Sigmoid colon (tissue), 7 donors: ENCODE measurements at regions of chrX and their contacts with region 1.

Region 1: GRCh38 chrX:19887911-19888879 is 795 bp upstream of the SH3KBP1 start:
- DNase-seq: peak; percentile 67
- H3K4me3 ChIP-seq: peak overlapping the region; percentile 39 to 74 (median 64)
- H3K27ac ChIP-seq: peak overlapping the region; percentile 50 to 64 (median 60)
- H3K4me1 ChIP-seq: peaks cover 0 to 14% (median 1%) of the 10 kb centered on the region in 4 donors
- H3K27me3 ChIP-seq: no peaks in the 10 kb centered on the region
- CTCF ChIP-seq: peak in 3 of 4 experiments; percentile 48 to 54 (median 52)
- EP300 ChIP-seq: no peak
- POLR2A ChIP-seq: no peak

Region 2: GRCh38 chrX:19372170-19372546 is 516.0 kb before region 1 on chrX:
- intact Hi-C with region 1: loop called (anchors 5 kb)
- DNase-seq: peak; percentile 72
- H3K4me3 ChIP-seq: peak overlapping the region; percentile 14 to 47 (median 40)
- H3K27ac ChIP-seq: no peak overlapping the region
- H3K4me1 ChIP-seq: peaks cover 0 to 10% (median 4%) of the 10 kb centered on the region in 4 donors
- H3K27me3 ChIP-seq: peaks cover 0 to 3% (median 0%) of the 10 kb centered on the region in 3 donors
- CTCF ChIP-seq: peak; percentile 32 to 58 (median 36)
- EP300 ChIP-seq: no peak
- POLR2A ChIP-seq: no peak

Region 3: GRCh38 chrX:19544693-19545305 is 343.4 kb before region 1 on chrX:
- intact Hi-C with region 1: loop called (anchors 2 kb)
- DNase-seq: no peak
- H3K4me3 ChIP-seq: no peak overlapping the region
- H3K27ac ChIP-seq: no peak overlapping the region
- H3K4me1 ChIP-seq: no peaks in the 10 kb centered on the region
- H3K27me3 ChIP-seq: no peaks in the 10 kb centered on the region
- CTCF ChIP-seq: peak; percentile 15 to 49 (median 26)
- EP300 ChIP-seq: no peak
- POLR2A ChIP-seq: no peak

Region 4: GRCh38 chrX:19593690-19594089 is 294.5 kb before region 1 on chrX:
- intact Hi-C with region 1: loop called (anchors 5 kb)
- DNase-seq: no peak
- H3K4me3 ChIP-seq: no peak overlapping the region
- H3K27ac ChIP-seq: no peak overlapping the region
- H3K4me1 ChIP-seq: no peaks in the 10 kb centered on the region
- H3K27me3 ChIP-seq: no peaks in the 10 kb centered on the region
- CTCF ChIP-seq: peak in 2 of 4 experiments; percentile 10 to 16
- EP300 ChIP-seq: no peak
- POLR2A ChIP-seq: no peak

Region 5: DNA sequence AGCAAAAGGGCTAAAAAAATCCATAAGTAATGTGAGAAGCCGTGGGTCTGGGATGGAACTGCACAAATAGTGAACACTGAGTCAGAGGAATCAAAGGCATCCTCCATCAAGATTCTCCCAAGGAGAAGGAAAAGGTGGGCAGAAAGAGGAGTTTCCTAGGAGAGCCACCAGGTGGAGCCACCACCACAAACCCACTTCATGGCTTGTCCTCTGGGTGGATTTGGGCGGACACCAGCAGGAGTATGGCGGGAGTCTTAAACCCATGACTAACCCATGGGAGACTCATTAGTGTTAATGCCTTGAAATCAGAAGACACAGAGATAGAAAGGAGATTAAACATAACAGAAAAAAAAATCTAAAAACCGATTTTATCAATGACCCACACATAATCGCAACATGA is 148.5 kb before region 1 on chrX:
- intact Hi-C with region 1: loop called (anchors 5 kb)
- DNase-seq: peak; percentile 75
- H3K4me3 ChIP-seq: no peak overlapping the region
- H3K27ac ChIP-seq: no peak overlapping the region
- H3K4me1 ChIP-seq: no peaks in the 10 kb centered on the region
- H3K27me3 ChIP-seq: no peaks in the 10 kb centered on the region
- CTCF ChIP-seq: peak in 3 of 4 experiments; percentile 23 to 36 (median 32)
- EP300 ChIP-seq: no peak
- POLR2A ChIP-seq: no peak

Region 6: GRCh38 chrX:20080277-20080676 is 192.1 kb after region 1 on chrX:
- intact Hi-C with region 1: no loop called
- DNase-seq: no peak
- H3K4me3 ChIP-seq: no peak overlapping the region
- H3K27ac ChIP-seq: no peak overlapping the region
- H3K4me1 ChIP-seq: no peaks in the 10 kb centered on the region
- H3K27me3 ChIP-seq: no peaks in the 10 kb centered on the region
- CTCF ChIP-seq: no peak
- EP300 ChIP-seq: no peak
- POLR2A ChIP-seq: no peak